ENCODE measurements at regions of chr12 and their contacts with region 1.

Region 1: GRCh38 chr12:121499929-121500793 is 80.7 kb downstream of the KDM2B start:
- DNase-seq: peak; percentile 37 to 73
- ATAC-seq: peak; percentile 85 to 90
- H3K4me3 ChIP-seq: peak overlapping the region; percentile 14 to 55 (median 42)
- H3K27ac ChIP-seq: peak overlapping the region; percentile 68 to 83 (median 74)
- H3K4me1 ChIP-seq: peaks cover 6 to 8% of the 10 kb centered on the region in 2 donors
- H3K27me3 ChIP-seq: no peaks in the 10 kb centered on the region
- CTCF ChIP-seq: peak; percentile 74 to 99 (median 89)
- POLR2A ChIP-seq: peak in 1 of 2 donors; percentile 7

Region 2: DNA sequence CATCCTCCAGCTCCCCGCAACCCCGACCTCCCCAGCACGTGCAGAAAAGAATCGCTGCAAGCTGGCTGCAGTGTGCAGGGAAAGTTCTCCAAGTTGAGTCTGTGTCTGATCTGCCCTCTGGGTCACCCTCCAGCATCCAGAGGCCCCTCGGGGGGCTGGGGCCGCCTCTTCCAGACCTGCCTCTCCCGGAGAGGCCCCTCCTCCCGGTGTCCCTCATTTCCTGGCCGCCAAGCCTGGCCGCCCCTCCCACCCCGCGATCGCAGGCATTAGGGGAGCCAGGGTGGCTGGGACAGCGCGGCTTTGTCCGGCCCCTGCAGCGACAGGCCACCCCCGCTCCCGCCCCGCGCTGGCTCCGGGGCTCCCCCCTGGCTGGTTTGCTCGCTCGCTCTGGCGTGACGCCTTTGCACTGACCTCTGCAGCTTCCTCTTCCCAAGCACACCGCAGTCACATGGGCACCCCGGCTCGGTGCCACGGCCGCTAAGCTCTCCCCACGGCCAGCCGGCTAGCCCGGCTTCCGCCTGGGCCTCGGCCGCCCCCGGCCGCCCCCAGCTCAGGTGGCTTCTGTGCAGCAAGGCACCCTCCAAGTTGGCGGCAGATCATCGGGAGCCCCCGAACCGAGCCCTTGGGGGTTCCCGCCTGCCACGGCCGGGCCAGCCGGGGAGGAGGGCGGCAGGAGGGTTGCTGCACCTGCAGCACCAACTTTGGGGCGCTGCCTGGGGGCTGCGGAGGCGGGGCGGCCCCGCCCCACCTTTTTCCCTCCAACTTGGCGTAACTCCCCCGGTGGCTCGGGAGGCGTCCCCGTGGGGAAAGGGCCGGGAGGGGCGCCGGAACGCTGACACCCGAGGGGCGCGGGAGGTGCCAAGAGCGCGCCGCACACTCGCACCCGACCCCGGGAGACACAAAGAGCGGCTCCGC is 37.0 kb after region 1 on chr12:
- in situ Hi-C with region 1: no loop called
- intact Hi-C with region 1: loop called (anchors 2 kb)
- DNase-seq: peak; percentile 81 to 91
- ATAC-seq: peak; percentile 81
- H3K4me3 ChIP-seq: peak overlapping the region; percentile 68 to 87 (median 82)
- H3K27ac ChIP-seq: peak overlapping the region; percentile 91 to 97 (median 94)
- H3K4me1 ChIP-seq: peaks cover 22 to 23% of the 10 kb centered on the region in 2 donors
- H3K27me3 ChIP-seq: no peaks in the 10 kb centered on the region
- CTCF ChIP-seq: no peak
- POLR2A ChIP-seq: peak; percentile 59 to 75

Region 3: DNA sequence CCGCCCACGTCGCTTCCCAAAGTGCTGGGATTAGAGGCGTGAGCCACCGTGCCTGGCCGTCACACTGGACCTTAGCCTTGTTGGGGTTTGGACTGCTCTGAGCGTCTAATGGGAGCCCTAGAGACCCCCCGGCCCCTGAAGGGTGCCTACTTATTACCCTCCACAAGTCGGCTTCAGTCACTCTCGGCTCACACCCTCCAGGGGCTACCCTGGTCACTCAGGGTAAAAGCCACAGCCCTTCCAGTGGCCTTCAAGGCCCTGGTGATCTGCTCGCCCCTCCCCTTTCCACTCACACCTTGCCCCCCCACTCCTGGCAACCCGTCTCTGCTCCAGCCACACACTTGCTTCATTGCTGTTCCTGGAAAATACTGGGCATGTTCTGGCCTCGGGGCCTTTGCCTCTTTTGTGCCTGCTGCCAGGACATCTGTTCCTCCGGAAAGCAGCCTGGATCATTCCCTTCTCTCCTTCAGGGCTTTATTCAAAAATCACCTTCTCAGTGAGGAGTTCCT is 172.9 kb after region 1 on chr12:
- in situ Hi-C with region 1: loop called in 2 of 4 experiments (anchors 10 kb)
- intact Hi-C with region 1: no loop called
- DNase-seq: peak in 1 of 2 donors; percentile 23
- ATAC-seq: peak; percentile 12 to 27
- H3K4me3 ChIP-seq: peak overlapping the region; percentile 26 to 56 (median 44)
- H3K27ac ChIP-seq: peak overlapping the region in 1 of 4 donors; percentile 25
- H3K4me1 ChIP-seq: peaks cover 0 to 6% of the 10 kb centered on the region in 2 donors
- H3K27me3 ChIP-seq: peaks cover 0 to 7% (median 0%) of the 10 kb centered on the region in 3 donors
- CTCF ChIP-seq: no peak
- POLR2A ChIP-seq: no peak

Region 4: GRCh38 chr12:121678716-121679580 is 178.8 kb after region 1 on chr12:
- in situ Hi-C with region 1: loop called in 2 of 4 experiments (anchors 10 kb)
- intact Hi-C with region 1: loop called (anchors 2 kb)
- DNase-seq: no peak
- ATAC-seq: no peak
- H3K4me3 ChIP-seq: no peak overlapping the region
- H3K27ac ChIP-seq: no peak overlapping the region
- H3K4me1 ChIP-seq: no peaks in the 10 kb centered on the region
- H3K27me3 ChIP-seq: no peaks in the 10 kb centered on the region
- CTCF ChIP-seq: no peak
- POLR2A ChIP-seq: no peak